Calu3 (cell line): ENCODE measurements at regions of chr4 and their contacts with region 1.

Region 1: GRCh38 chr4:154559494-154560418 is 3.1 kb upstream of the FGB start:
- DNase-seq: peak; percentile 47
- H3K4me3 Mint-ChIP-seq: no peak overlapping the region
- H3K27ac Mint-ChIP-seq: peak overlapping the region; percentile 27
- H3K4me1 Mint-ChIP-seq: peaks cover 18% of the 10 kb centered on the region
- H3K27me3 Mint-ChIP-seq: no peaks in the 10 kb centered on the region
- CTCF ChIP-seq: peak; percentile 57

Region 2: GRCh38 chr4:154595807-154596206 is 36.1 kb after region 1 on chr4:
- CTCF ChIA-PET with region 1: interaction called, 3 read pairs
- intact Hi-C with region 1: loop called (anchors 5 kb)
- DNase-seq: no peak
- H3K4me3 Mint-ChIP-seq: no peak overlapping the region
- H3K27ac Mint-ChIP-seq: no peak overlapping the region
- H3K4me1 Mint-ChIP-seq: peaks cover 8% of the 10 kb centered on the region
- H3K27me3 Mint-ChIP-seq: no peaks in the 10 kb centered on the region
- CTCF ChIP-seq: no peak

Region 3: GRCh38 chr4:154618708-154619315 is 59.1 kb after region 1 on chr4:
- CTCF ChIA-PET with region 1: interaction called, 84 read pairs
- intact Hi-C with region 1: loop called (anchors 1 kb)
- DNase-seq: peak; percentile 67
- H3K4me3 Mint-ChIP-seq: no peak overlapping the region
- H3K27ac Mint-ChIP-seq: no peak overlapping the region
- H3K4me1 Mint-ChIP-seq: no peaks in the 10 kb centered on the region
- H3K27me3 Mint-ChIP-seq: no peaks in the 10 kb centered on the region
- CTCF ChIP-seq: peak; percentile 56

Region 4: DNA sequence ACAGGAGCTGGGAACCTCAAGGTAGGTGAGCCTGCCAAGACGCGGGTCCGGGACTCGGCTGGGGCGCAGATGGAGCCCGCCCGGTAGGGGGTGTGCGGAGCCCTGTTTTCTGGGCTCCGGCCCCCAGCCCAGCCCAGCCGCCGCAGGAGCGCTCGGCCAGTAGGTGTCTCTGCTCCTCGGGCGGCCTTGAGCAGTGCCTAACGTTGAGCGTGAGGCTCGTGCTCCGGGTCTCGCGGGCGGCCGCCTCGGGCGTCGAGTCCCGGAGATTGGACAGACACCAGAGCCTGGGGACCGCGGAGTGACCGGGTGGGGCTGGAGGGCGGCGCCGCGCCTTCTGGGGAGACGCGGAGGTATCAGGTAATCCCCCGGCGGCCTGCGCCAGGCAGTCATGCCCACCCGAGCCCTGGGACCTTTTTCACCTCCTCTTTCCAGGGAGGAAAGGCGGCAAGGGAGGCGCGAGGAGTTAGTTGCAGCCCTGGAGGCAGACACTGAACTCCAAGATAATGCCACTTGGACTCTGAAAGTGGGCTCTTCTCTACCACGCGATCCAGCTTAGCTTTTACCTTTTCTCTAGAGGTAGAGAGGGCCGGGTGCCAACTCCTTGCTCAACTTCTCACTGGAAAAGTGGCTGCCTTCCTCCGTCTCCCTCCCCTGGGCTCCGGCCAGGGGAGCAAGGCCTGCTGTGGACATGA is 67.2 kb after region 1 on chr4:
- CTCF ChIA-PET with region 1: interaction called, 13 read pairs
- intact Hi-C with region 1: loop called (anchors 1 kb)
- DNase-seq: peak; percentile 86
- H3K4me3 Mint-ChIP-seq: no peak overlapping the region
- H3K27ac Mint-ChIP-seq: no peak overlapping the region
- H3K4me1 Mint-ChIP-seq: peaks cover 17% of the 10 kb centered on the region
- H3K27me3 Mint-ChIP-seq: no peaks in the 10 kb centered on the region
- CTCF ChIP-seq: peak; percentile 62